WTC11 (cell line): ENCODE measurements at regions of chr7 and their contacts with region 1.

Region 1: DNA sequence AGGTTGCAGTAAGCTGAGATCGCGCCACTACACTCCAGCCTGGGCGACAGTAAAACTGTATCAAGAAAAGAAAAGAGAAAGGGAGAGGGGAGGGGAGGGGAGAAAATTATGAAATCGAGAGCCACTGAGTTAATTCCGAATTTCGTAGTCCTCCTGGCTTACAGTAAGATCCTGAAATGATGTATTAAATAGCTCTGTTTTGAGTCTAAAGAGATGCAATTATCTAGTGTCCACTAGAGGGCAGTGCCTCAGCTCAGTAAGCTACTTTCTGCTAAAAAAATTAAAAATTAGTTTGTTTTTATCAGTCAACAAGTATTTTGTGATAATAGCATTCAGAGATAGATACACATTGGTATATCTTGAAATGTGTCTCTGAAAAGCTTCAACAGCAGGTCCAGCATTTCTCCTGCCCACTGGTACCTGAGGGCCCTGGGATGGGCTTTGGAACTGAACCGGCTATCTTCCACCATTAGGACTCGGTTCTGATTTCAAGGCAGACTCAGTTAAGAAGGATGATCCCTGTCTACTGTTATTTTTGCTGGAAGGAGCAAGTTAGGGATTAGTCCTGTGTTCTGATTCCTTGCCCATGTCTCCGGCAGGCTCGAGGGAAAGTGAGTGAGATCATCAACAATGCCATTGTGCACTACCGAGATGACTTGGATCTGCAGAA is 19.5 kb downstream of the TSPAN33 start:
- DNase-seq: no peak
- ATAC-seq: no peak
- H3K4me3 Mint-ChIP-seq: no peak overlapping the region
- H3K27ac Mint-ChIP-seq: no peak overlapping the region
- H3K4me1 Mint-ChIP-seq: peaks cover 17% of the 10 kb centered on the region
- H3K27me3 Mint-ChIP-seq: no peaks in the 10 kb centered on the region
- CTCF ChIP-seq: peak; percentile 67

Region 2: DNA sequence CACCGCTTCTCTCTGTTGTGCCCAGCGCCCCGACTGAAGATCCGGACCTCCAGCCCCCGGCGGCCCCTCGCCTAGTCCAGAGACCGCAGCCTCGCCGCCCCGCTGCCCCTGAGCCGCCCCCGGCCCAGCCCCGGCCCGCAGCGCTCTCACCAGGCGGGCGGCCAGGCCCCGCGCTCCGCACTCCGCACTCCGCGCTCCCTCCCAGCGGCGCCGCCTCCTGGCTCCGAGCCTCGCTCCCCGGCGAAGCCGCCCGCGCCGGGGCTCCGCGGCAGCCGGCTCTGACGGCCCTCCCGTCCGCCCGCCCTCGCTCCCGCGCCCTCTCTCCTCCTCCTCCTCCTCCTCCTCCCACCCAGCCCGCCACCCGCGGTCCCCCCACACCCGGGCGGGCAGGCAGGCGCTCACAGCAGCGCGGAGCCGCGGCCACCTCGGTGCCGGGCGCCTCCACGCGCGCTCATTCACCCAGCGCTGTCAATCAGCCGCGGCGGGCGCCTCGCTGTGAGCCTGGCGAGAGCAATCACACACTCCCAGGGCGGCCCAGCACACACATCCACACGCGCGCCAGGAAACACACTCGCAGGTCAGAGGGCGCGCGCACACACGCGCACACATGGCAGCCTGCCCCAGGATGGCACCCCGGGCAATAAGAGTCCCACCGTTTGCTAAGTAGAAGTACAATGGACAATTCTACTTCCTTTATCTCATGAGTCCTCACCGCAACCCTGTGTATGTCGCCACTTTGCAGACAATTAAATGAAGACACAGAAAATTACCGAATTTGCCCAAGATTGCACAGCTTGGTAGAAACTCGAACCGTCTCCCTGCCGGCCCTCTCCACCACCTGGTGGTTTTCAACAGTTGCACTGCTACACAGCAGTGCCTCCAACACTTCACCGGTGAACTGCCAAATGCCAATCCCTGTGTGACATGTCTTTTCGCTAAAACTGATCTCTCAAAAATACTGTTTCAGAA is 802.3 kb before region 1 on chr7 and contains the start of gene PRRT4:
- CTCF ChIA-PET with region 1: no interaction called
- POLR2A ChIA-PET with region 1: no interaction called
- DNase-seq: peak; percentile 38
- ATAC-seq: peak; percentile 40
- H3K4me3 Mint-ChIP-seq: peak within 1 kb of the TSS; percentile 74
- H3K27ac Mint-ChIP-seq: no peak within 1 kb of the TSS
- H3K4me1 Mint-ChIP-seq: peaks cover 23% of the 10 kb centered on the region
- H3K27me3 Mint-ChIP-seq: peaks cover 94% of the 10 kb centered on the region
- CTCF ChIP-seq: no peak
- total RNA-seq, gene PRRT4: 0.92 to 1.5 TPM (median 1.2 TPM) in 3 replicates

Region 3: DNA sequence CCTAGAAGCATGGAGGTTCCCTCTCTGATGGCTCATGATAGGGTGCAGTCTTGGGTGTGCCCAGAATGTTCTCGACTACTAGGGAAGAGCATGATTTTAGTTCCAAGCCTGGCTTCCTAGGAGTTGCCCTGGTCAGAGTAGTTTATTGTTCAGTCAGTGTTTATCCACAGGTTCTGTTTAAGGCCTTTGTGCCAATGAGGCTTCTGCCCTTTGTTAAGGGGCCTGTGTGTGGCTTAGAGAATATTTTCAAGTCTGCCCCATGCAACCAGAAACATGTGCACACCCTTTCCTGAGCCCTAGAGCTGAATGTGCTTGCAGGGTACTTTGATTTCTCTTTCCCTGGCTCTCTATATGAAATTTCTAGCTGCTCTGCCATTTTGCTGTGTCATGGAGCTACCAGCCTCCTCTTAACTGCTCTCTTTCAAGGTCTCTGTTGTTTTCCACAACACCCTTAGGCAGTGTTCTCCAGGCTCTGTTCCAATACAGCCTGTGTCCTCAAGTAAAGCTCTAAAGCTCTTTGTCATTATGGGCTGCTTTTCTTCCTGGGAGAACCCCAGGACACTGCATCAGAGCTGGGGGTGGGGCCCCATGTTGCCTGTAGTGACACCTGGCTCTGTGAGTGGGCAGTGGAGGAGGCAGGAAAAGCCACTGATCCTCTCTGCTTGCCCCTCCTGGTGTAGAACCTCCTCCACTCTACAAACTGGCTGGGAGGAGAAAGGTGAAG is 53.6 kb before region 1 on chr7:
- CTCF ChIA-PET with region 1: interaction called, 14 read pairs
- POLR2A ChIA-PET with region 1: interaction called, 5 read pairs
- DNase-seq: peak; percentile 38
- ATAC-seq: peak; percentile 98
- H3K4me3 Mint-ChIP-seq: no peak overlapping the region
- H3K27ac Mint-ChIP-seq: peak overlapping the region; percentile 90
- H3K4me1 Mint-ChIP-seq: peaks cover 10% of the 10 kb centered on the region
- H3K27me3 Mint-ChIP-seq: no peaks in the 10 kb centered on the region
- CTCF ChIP-seq: no peak

Region 4: GRCh38 chr7:129134356-129134987 is 29.5 kb before region 1 on chr7:
- CTCF ChIA-PET with region 1: interaction called, 11 read pairs
- POLR2A ChIA-PET with region 1: no interaction called
- DNase-seq: no peak
- ATAC-seq: no peak
- H3K4me3 Mint-ChIP-seq: no peak overlapping the region
- H3K27ac Mint-ChIP-seq: peak overlapping the region; percentile 57; the same call in 1 of the 2 replicates
- H3K4me1 Mint-ChIP-seq: no peaks in the 10 kb centered on the region
- H3K27me3 Mint-ChIP-seq: no peaks in the 10 kb centered on the region; the same call in 1 of the 2 replicates
- CTCF ChIP-seq: no peak

Region 5: GRCh38 chr7:129150199-129150996 is 13.6 kb before region 1 on chr7:
- CTCF ChIA-PET with region 1: interaction called, 27 read pairs
- POLR2A ChIA-PET with region 1: interaction called, 5 read pairs
- DNase-seq: peak; percentile 54
- ATAC-seq: peak; percentile 95
- H3K4me3 Mint-ChIP-seq: no peak overlapping the region
- H3K27ac Mint-ChIP-seq: peak overlapping the region; percentile 26; the same call in 1 of the 2 replicates
- H3K4me1 Mint-ChIP-seq: peaks cover 21% of the 10 kb centered on the region
- H3K27me3 Mint-ChIP-seq: peaks cover 8% of the 10 kb centered on the region
- CTCF ChIP-seq: no peak

Region 6: GRCh38 chr7:129202058-129202777 is 38.2 kb after region 1 on chr7:
- CTCF ChIA-PET with region 1: interaction called, 23 read pairs
- POLR2A ChIA-PET with region 1: no interaction called
- DNase-seq: no peak
- ATAC-seq: no peak
- H3K4me3 Mint-ChIP-seq: no peak overlapping the region
- H3K27ac Mint-ChIP-seq: no peak overlapping the region
- H3K4me1 Mint-ChIP-seq: no peaks in the 10 kb centered on the region
- H3K27me3 Mint-ChIP-seq: no peaks in the 10 kb centered on the region
- CTCF ChIP-seq: no peak